ENCODE measurements at regions of chr12 and their contacts with region 1.

Region 1: DNA sequence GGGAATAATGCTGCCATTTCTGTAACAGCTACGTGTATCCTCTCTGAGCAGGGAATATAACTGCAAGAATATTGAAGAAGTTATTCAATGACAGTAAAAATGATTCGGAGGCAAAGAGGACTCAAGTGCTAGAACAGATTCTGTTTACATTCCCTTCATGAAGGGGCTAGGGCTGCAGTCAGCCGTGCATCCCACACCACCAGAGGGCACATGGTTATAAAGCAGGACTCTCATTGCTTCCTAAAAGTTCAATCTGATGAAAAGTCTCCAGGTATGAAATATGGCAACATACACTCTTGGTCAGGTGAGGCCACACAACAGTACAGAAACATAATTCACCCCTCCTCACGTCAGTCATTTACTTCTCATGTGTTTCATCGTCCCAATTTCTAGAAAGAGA is 34.0 kb downstream of the TCHP start:
- DNase-seq: peak; percentile 52
- ATAC-seq: peak; percentile 74; the same call in 1 of the 2 replicates
- H3K4me3 ChIP-seq: no peak overlapping the region
- H3K27ac ChIP-seq: no peak overlapping the region
- H3K4me1 ChIP-seq: no peaks in the 10 kb centered on the region; the same call in 1 of the 2 replicates
- H3K27me3 ChIP-seq: no peaks in the 10 kb centered on the region
- CTCF ChIP-seq: peak; percentile 55
- POLR2A ChIP-seq: no peak
- RAD21 ChIP-seq: peak; percentile 59

Region 2: GRCh38 chr12:109995686-109996482 is 61.9 kb after region 1 on chr12 and contains the start of gene GIT2:
- CTCF ChIA-PET with region 1: no interaction called
- POLR2A ChIA-PET with region 1: no interaction called
- dilution Hi-C with region 1: no loop called
- in situ Hi-C with region 1: no loop called
- intact Hi-C with region 1: loop called (anchors 5 kb)
- DNase-seq: peak; percentile 90
- ATAC-seq: peak; percentile 65
- H3K4me3 ChIP-seq: peak within 1 kb of the TSS; percentile 85
- H3K27ac ChIP-seq: peak within 1 kb of the TSS; percentile 90
- H3K4me1 ChIP-seq: peaks cover 7% of the 10 kb centered on the region; the same call in 1 of the 2 replicates
- H3K27me3 ChIP-seq: no peaks in the 10 kb centered on the region
- CTCF ChIP-seq: 0 out of 2 replicates have a peak, but pooled peaks have one; percentile 4
- POLR2A ChIP-seq: no peak
- RAD21 ChIP-seq: no peak
- total RNA-seq, gene GIT2: 60.5 and 71.9 TPM in 2 replicates

Region 3: DNA sequence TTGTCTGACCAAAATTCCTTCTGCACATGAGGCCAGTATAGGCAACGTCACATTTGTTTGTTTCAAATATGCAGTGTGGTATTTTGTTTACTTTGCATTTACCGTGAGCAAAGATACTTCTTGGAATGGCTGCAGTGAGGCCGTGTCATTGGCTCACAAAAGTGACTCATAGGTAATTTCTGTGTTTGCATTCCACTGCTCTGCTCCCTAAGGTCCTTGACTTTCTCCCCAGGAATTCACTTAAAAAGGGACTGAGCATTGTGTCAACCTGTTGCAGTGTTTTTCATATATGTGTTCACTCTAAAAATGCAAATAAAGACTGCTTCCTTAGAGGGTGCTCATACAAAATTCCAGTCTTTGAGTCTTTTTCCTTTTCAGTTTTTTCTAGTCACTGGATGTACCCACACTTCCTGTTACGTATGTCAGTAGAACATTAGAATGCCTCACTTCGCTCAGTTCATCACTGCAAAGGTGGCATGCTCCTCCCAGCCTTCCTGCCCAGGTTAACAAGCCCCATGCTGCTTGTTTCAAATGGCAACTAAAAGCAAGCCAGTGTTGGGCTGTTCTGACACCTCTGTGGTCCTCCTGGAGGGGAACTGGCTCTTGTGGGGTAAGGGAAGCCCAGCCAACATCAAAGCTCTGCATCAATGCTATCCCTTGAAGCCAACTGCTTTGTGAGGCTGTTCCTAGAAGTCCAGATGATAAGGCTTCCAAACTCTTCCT is 105.2 kb after region 1 on chr12:
- CTCF ChIA-PET with region 1: no interaction called
- POLR2A ChIA-PET with region 1: no interaction called
- dilution Hi-C with region 1: no loop called
- in situ Hi-C with region 1: no loop called
- intact Hi-C with region 1: loop called (anchors 2 kb)
- DNase-seq: peak; percentile 98
- ATAC-seq: peak; percentile 84
- H3K4me3 ChIP-seq: no peak overlapping the region
- H3K27ac ChIP-seq: peak overlapping the region; percentile 99
- H3K4me1 ChIP-seq: peaks cover 28% of the 10 kb centered on the region
- H3K27me3 ChIP-seq: no peaks in the 10 kb centered on the region
- CTCF ChIP-seq: no peak
- POLR2A ChIP-seq: no peak
- RAD21 ChIP-seq: 0 out of 2 replicates have a peak, but pooled peaks have one; percentile 5

Measured in IMR-90 (cell line).